Heart left ventricle (tissue), 16 donors: ENCODE measurements at regions of chr4 and their contacts with region 1.

Region 1: DNA sequence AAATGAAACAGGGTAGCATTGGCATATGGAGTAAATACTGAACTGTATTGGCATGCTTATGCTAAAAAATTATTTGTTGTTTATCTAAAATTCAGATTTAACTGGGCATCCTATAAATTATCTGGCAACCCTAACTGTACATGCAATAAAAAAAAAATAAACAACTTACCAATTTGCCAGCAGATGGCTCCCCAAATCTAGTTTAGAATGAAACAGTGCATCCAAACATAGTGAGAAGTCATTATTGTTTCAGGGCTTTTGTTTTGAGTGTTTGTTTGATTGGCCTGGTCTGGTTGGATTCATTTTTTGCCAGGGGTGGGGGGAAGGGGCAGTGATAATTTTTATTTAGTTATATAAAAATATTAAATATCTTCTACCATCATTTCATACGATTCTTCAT is 12.8 kb upstream of the NSUN7 start:
- DNase-seq: no peak
- ATAC-seq: no peak
- H3K4me3 ChIP-seq: no peak overlapping the region
- H3K27ac ChIP-seq: no peak overlapping the region
- H3K4me1 ChIP-seq: peaks cover 0 to 20% (median 0%) of the 10 kb centered on the region in 12 donors
- H3K27me3 ChIP-seq: peaks cover 0 to 5% (median 0%) of the 10 kb centered on the region in 9 donors
- CTCF ChIP-seq: peak in 8 of 12 donors; percentile 18 to 50 (median 31)
- POLR2A ChIP-seq: no peak

Region 2: DNA sequence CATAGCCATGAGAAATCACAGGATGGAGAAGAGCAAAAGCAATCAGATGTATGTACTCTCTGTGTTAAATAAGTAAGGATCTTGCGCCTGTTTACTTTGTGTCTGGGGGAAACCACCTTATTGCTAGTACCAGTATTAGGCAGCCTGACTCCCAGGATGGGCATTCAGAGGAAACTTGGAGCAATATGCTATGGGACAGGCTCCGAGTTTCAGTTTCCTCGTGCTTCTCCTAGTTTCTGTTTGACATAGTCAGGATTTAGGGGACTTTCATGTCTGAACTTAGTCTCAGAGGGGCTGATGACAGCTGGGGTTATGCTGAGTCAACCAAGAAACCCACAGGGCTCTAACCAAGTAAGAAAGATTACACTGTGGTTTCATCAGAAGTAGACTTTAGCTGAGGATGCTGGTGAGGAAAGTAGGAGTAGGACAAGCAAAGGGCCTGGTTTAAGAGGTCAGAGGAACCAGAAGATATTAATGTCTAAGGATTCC is 26.4 kb after region 1 on chr4:
- intact Hi-C with region 1: no loop called
- DNase-seq: no peak
- ATAC-seq: no peak
- H3K4me3 ChIP-seq: no peak overlapping the region
- H3K27ac ChIP-seq: no peak overlapping the region
- H3K4me1 ChIP-seq: peaks cover 0 to 5% (median 0%) of the 10 kb centered on the region in 12 donors
- H3K27me3 ChIP-seq: no peaks in the 10 kb centered on the region
- CTCF ChIP-seq: no peak
- POLR2A ChIP-seq: no peak

Region 3: DNA sequence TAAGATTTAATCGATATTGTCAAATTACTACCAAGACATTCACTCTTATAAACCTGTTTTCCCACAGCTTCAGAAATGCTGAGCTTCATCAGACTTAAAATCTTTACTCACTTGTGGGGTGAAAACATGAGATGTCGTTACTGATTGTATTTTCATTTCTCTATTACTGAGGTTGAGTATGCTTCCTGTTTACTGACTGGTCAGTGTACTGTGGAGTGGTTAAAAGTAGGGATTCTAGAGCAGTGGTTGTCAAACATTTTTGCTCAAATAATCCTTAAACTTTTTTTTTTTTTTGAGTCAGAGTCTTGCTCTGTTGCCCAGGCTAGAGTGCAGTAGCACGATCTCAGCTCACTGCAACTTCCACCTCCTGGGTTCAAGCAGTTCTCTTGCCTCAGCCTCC is 63.2 kb after region 1 on chr4:
- intact Hi-C with region 1: no loop called
- DNase-seq: no peak
- ATAC-seq: no peak
- H3K4me3 ChIP-seq: no peak overlapping the region
- H3K27ac ChIP-seq: no peak overlapping the region
- H3K4me1 ChIP-seq: peaks cover 0 to 4% (median 0%) of the 10 kb centered on the region in 12 donors
- H3K27me3 ChIP-seq: no peaks in the 10 kb centered on the region
- CTCF ChIP-seq: no peak
- POLR2A ChIP-seq: no peak

Region 4: GRCh38 chr4:40840985-40841571 is 104.2 kb after region 1 on chr4:
- intact Hi-C with region 1: loop called in 1 of 10 experiments (anchors 5 kb)
- DNase-seq: peak; percentile 63 to 82 (median 70)
- ATAC-seq: peak; percentile 32 to 70 (median 66)
- H3K4me3 ChIP-seq: no peak overlapping the region
- H3K27ac ChIP-seq: peak overlapping the region in 2 of 12 donors; percentile 68 to 73
- H3K4me1 ChIP-seq: peaks cover 0 to 27% (median 12%) of the 10 kb centered on the region in 12 donors
- H3K27me3 ChIP-seq: no peaks in the 10 kb centered on the region
- CTCF ChIP-seq: peak; percentile 40 to 71 (median 56)
- POLR2A ChIP-seq: no peak

Region 5: GRCh38 chr4:40998675-40999358 is 261.9 kb after region 1 on chr4:
- intact Hi-C with region 1: no loop called
- DNase-seq: peak in 4 of 5 donors; percentile 32 to 47 (median 46)
- ATAC-seq: peak in 3 of 4 donors; percentile 75 to 94 (median 80)
- H3K4me3 ChIP-seq: peak overlapping the region in 9 of 12 donors; percentile 6 to 42 (median 26)
- H3K27ac ChIP-seq: peak overlapping the region in 9 of 12 donors; percentile 32 to 73 (median 54)
- H3K4me1 ChIP-seq: peaks cover 0 to 12% (median 4%) of the 10 kb centered on the region in 12 donors
- H3K27me3 ChIP-seq: no peaks in the 10 kb centered on the region
- CTCF ChIP-seq: no peak
- POLR2A ChIP-seq: no peak

Region 6: DNA sequence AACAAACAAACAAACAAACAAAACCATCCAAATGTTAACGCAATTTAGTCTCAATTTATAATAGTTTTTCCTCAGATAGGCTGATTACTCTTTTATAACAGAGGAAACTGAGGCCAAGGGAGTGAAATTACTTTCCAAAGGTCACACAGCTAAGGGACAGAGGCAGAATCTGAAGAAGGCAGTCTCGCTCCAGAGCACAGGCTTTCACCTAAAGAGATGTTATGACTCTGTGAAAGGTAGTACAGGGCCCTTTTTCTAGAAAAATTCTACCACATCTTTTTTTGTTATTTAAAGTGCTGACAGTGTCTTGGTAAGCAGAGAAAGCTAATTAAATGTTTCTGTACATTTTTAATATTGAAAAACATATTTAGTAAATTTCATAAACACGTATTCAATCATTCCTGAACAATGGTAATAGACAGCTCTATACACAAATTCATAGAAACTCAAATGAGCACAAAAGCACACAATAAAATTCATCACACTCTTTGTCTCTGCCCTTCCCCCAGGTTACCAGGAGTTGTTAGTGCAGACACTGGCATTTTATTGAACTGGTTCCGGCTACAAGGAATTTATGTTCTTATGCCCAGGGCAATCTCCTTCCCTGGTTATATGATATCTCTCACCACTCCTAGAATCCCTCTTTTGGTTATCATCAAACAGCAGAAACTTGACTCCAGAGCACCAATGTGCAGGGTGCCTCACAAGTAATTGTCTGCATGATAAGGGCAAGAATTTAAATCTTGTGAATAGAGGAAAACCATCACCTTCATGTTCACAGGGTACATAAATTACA is 485.1 kb after region 1 on chr4:
- intact Hi-C with region 1: loop called in 2 of 10 experiments (anchors 10 kb)
- DNase-seq: no peak
- ATAC-seq: no peak
- H3K4me3 ChIP-seq: no peak overlapping the region
- H3K27ac ChIP-seq: no peak overlapping the region
- H3K4me1 ChIP-seq: peaks cover 0 to 9% (median 4%) of the 10 kb centered on the region in 12 donors
- H3K27me3 ChIP-seq: no peaks in the 10 kb centered on the region
- CTCF ChIP-seq: no peak
- POLR2A ChIP-seq: no peak